Common myeloid progenitor, CD34-positive (primary cell): ENCODE measurements at regions of chr1 and their contacts with region 1.

Region 1: DNA sequence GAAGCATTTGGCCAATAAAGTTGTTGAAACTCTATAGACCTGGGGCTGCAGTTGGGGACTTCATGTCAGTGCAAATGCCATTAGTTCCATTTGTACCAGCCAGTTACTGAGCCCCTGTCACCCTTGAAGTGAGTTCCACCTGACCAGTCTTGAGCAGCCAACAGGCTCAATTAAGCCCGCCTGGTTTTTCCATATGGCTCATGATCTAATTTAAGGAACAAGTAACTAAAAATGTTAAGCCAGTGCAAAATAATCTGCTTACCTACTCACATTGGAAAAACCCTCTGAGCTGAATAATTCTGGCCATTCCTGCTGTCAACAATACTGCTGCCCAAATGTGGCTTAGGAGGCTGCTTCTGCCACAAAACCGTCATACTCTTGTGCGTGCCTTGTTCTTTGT is 21.6 kb downstream of the NSUN4 start:
- DNase-seq: no peak
- H3K4me3 ChIP-seq: no peak overlapping the region
- H3K27ac ChIP-seq: no peak overlapping the region
- H3K4me1 ChIP-seq: no peaks in the 10 kb centered on the region
- H3K27me3 ChIP-seq: no peaks in the 10 kb centered on the region

Region 2: GRCh38 chr1:46340404-46341221 is 21.5 kb before region 1 on chr1 and contains the start of gene NSUN4:
- CTCF ChIA-PET with region 1: interaction called, 16 read pairs
- POLR2A ChIA-PET with region 1: no interaction called
- DNase-seq: peak; percentile 93 to 96 (median 96)
- H3K4me3 ChIP-seq: peak within 1 kb of the TSS; percentile 54 to 96 (median 89)
- H3K27ac ChIP-seq: peak within 1 kb of the TSS; percentile 95 to 98
- H3K4me1 ChIP-seq: peaks cover 3 to 22% (median 16%) of the 10 kb centered on the region in 4 experiments
- H3K27me3 ChIP-seq: no peaks in the 10 kb centered on the region

Region 3: GRCh38 chr1:46372425-46372824 is 10.3 kb after region 1 on chr1:
- CTCF ChIA-PET with region 1: no interaction called
- POLR2A ChIA-PET with region 1: no interaction called
- DNase-seq: no peak
- H3K4me3 ChIP-seq: no peak overlapping the region
- H3K27ac ChIP-seq: no peak overlapping the region
- H3K4me1 ChIP-seq: peaks cover 0 to 18% (median 0%) of the 10 kb centered on the region in 4 experiments
- H3K27me3 ChIP-seq: no peaks in the 10 kb centered on the region